Transverse colon (tissue), 4 donors: ENCODE measurements at regions of chr10 and their contacts with region 1.

Region 1: GRCh38 chr10:89391917-89392756 is at the start of gene IFIT1:
- DNase-seq: peak; percentile 59
- H3K4me3 ChIP-seq: peak within 1 kb of the TSS; percentile 24 to 56 (median 38)
- H3K27ac ChIP-seq: peak within 1 kb of the TSS; percentile 59 to 90 (median 78)
- H3K4me1 ChIP-seq: peaks cover 8 to 27% (median 21%) of the 10 kb centered on the region in 4 donors
- H3K27me3 ChIP-seq: no peaks in the 10 kb centered on the region
- CTCF ChIP-seq: no peak
- EP300 ChIP-seq: no peak
- POLR2A ChIP-seq: no peak
- total RNA-seq, gene IFIT1: 1.1 to 18.5 (median 9.4) TPM

Region 2: GRCh38 chr10:89327784-89328441 is 64.2 kb before region 1 on chr10 and contains the start of gene IFIT3:
- in situ Hi-C with region 1: no loop called
- intact Hi-C with region 1: loop called (anchors 5 kb)
- DNase-seq: peak; percentile 52
- H3K4me3 ChIP-seq: peak within 1 kb of the TSS in 3 of 4 donors; percentile 34 to 47 (median 37)
- H3K27ac ChIP-seq: peak within 1 kb of the TSS; percentile 70 to 83 (median 78)
- H3K4me1 ChIP-seq: peaks cover under 1 to 38% (median 11%) of the 10 kb centered on the region in 4 donors
- H3K27me3 ChIP-seq: no peaks in the 10 kb centered on the region
- CTCF ChIP-seq: peak in 1 of 5 experiments; percentile 11
- EP300 ChIP-seq: no peak
- POLR2A ChIP-seq: peak; percentile 24
- total RNA-seq, gene IFIT3: 0.20 to 7.8 (median 5.1) TPM in 3 of 4 donors, not detected in the other

Region 3: GRCh38 chr10:89502556-89502955 is 110.4 kb after region 1 on chr10:
- in situ Hi-C with region 1: no loop called
- intact Hi-C with region 1: no loop called
- DNase-seq: no peak
- H3K4me3 ChIP-seq: no peak overlapping the region
- H3K27ac ChIP-seq: no peak overlapping the region
- H3K4me1 ChIP-seq: no peaks in the 10 kb centered on the region
- H3K27me3 ChIP-seq: no peaks in the 10 kb centered on the region
- CTCF ChIP-seq: no peak
- EP300 ChIP-seq: no peak
- POLR2A ChIP-seq: no peak

Region 4: GRCh38 chr10:89609833-89610346 is 217.8 kb after region 1 on chr10:
- in situ Hi-C with region 1: no loop called
- intact Hi-C with region 1: no loop called
- DNase-seq: no peak
- H3K4me3 ChIP-seq: no peak overlapping the region
- H3K27ac ChIP-seq: no peak overlapping the region
- H3K4me1 ChIP-seq: no peaks in the 10 kb centered on the region
- H3K27me3 ChIP-seq: no peaks in the 10 kb centered on the region
- CTCF ChIP-seq: no peak
- EP300 ChIP-seq: no peak
- POLR2A ChIP-seq: no peak

Region 5: DNA sequence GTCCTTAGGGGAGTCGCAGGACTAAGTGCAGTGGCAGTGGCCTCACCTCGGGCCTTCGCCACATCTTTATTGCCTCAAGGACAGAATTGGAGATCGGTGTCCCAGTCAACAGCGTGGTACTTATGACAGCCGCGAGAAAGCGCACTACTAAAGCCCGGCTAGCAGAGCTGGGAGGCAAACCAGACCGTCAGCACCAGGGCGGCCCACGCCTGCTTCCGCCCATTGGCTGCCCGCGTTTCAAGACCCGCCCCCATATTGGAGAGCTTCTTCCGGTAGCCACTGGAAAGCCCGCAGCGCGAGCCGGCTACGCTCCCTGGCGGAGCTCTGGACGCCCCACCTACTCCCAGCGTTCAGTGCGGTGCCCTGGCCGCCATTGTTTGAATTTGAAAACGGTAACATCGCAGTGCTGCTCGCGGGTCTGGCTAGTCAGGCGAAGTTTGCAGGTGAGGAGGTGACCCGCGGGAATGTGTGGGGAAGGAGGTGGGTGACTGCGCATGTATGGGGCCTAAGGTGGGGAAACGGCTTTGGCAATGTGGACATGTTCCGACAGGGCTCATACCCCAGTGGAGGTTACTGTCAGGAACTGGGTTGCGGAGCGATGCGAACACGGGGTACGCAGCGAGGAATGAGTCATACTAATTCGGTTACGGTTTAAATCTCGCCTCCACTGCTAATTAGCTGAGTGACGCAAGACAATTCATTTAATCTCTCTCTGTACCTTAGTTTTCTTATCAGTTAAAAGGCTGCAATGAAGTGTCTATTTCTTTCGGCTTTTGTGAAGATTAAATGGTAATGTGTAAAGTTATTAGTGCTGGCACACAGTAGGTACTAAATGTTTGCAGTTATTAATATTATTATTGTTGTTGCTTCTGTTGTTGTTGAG is 309.3 kb after region 1 on chr10 and contains the start of gene KIF20B:
- in situ Hi-C with region 1: no loop called
- intact Hi-C with region 1: no loop called
- DNase-seq: peak; percentile 96
- H3K4me3 ChIP-seq: peak within 1 kb of the TSS; percentile 50 to 71 (median 54)
- H3K27ac ChIP-seq: peak within 1 kb of the TSS; percentile 80 to 87 (median 84)
- H3K4me1 ChIP-seq: peaks cover 5 to 30% (median 9%) of the 10 kb centered on the region in 4 donors
- H3K27me3 ChIP-seq: no peaks in the 10 kb centered on the region
- CTCF ChIP-seq: peak in 4 of 5 experiments; percentile 23 to 74 (median 38)
- EP300 ChIP-seq: no peak
- POLR2A ChIP-seq: peak; percentile 75
- total RNA-seq, gene KIF20B: 0.37 to 3.3 (median 2.5) TPM